ENCODE measurements at regions of chr18 and their contacts with region 1.

Region 1: DNA sequence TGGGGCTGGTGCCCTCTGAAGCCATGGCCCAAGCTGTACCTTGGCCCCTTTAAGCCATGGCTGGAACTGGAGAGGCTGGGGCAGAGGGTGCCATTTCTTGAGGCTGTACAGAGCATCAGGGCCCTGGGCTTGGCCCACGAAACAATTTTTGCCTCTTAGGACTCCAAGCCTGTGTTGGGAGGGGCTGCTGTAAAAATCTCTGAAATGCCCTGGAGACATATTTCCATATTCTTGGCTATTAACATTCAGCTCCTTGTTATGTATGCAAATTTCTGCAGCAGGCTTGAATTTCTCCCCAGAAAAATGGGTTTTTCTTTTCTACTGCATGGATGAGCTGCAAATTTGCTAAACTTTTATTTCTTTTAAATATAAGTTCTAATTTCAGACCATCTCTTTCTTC is 834.0 kb downstream of the DSC3 start:
- DNase-seq: no peak
- ATAC-seq: no peak
- H3K4me3 ChIP-seq: no peak overlapping the region
- H3K27ac ChIP-seq: no peak overlapping the region
- H3K4me1 ChIP-seq: no peaks in the 10 kb centered on the region
- H3K27me3 ChIP-seq: no peaks in the 10 kb centered on the region
- CTCF ChIP-seq: no peak
- EP300 ChIP-seq: no peak
- POLR2A ChIP-seq: no peak
- RAD21 ChIP-seq: no peak

Region 2: GRCh38 chr18:29629493-29630042 is 579.0 kb before region 1 on chr18:
- CTCF ChIA-PET with region 1: no interaction called
- POLR2A ChIA-PET with region 1: no interaction called
- in situ Hi-C with region 1: no loop called
- intact Hi-C with region 1: no loop called
- DNase-seq: no peak
- ATAC-seq: no peak
- H3K4me3 ChIP-seq: no peak overlapping the region
- H3K27ac ChIP-seq: no peak overlapping the region
- H3K4me1 ChIP-seq: no peaks in the 10 kb centered on the region
- H3K27me3 ChIP-seq: no peaks in the 10 kb centered on the region
- CTCF ChIP-seq: no peak
- EP300 ChIP-seq: no peak
- POLR2A ChIP-seq: no peak
- RAD21 ChIP-seq: no peak

Region 3: DNA sequence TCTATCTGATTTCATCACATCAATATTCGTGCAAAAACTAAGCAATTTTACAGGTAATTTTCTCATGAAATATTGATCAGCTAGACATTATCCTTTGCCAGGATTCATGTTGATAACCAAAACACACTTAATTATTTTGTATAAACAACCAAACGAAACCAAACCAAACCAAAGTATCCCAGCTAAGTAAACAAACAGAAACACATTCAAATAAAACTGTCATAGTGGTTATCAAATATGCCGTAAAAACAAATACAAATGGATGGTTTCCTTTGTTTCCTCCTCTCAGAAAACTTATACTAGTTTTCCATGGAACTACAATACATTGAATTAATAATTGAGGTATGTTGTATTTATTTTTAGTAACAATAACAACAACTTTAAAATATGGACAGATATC is 56.6 kb after region 1 on chr18:
- CTCF ChIA-PET with region 1: no interaction called
- POLR2A ChIA-PET with region 1: no interaction called
- in situ Hi-C with region 1: no loop called
- intact Hi-C with region 1: loop called (anchors 10 kb)
- DNase-seq: no peak
- ATAC-seq: no peak
- H3K4me3 ChIP-seq: no peak overlapping the region
- H3K27ac ChIP-seq: no peak overlapping the region
- H3K4me1 ChIP-seq: no peaks in the 10 kb centered on the region
- H3K27me3 ChIP-seq: no peaks in the 10 kb centered on the region
- CTCF ChIP-seq: no peak
- EP300 ChIP-seq: no peak
- POLR2A ChIP-seq: no peak
- RAD21 ChIP-seq: no peak